ENCODE measurements at regions of chr12 and their contacts with region 1.

Region 1: DNA sequence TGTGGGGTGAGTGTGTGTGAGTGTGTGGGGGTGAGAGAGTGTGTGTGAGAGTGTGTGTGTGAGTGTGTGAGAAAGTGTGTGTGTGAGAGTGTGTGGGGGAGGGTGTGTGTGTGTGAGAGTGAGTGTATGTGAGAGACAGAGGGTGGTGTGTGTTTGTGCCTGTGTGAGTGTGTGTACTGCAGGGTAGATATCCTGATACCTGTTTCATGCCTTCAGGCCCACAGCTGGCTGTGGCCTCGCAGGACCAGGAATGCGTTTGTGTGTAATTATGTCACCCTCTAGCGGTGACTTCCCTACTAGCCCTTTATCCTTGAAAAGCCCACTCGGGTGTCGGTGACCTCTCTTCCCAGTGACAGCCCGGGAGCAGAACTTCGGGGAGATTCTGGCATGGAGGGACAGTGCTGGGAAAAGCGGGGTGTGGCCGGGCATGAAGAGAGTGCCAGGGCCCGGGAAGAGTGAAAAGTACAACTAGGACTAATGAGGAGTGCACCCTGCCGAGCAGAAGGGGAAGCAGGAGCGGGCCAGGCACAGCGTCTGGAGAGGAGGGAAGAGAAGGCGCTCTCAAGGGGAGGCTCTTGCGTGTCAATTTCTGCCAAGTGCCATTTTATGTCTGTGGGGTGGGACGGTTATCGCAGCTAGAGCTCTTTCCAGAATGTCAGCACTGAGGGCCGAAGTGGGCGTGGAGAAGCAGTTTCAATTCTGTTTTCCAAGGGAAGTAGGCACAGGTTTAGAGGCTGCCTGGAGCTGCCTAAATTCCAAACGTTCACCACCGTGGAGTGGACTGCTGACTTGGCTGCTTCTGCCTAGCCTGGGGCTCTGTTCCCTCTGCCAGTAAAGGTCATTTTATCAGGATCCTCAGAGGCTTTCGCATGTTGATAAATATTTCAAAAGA is 11.0 kb upstream of the FBXL14 start:
- DNase-seq: peak; percentile 45 to 89
- ATAC-seq: peak; percentile 69 to 78 (median 76)
- H3K4me3 ChIP-seq: peak overlapping the region; percentile 29
- H3K4me3 Mint-ChIP-seq: peak overlapping the region; percentile 94
- H3K27ac ChIP-seq: no peak overlapping the region
- H3K27ac Mint-ChIP-seq: peak overlapping the region; percentile 54 to 89
- H3K4me1 ChIP-seq: peaks cover 31% of the 10 kb centered on the region
- H3K4me1 Mint-ChIP-seq: peaks cover 21 to 32% of the 10 kb centered on the region in 2 donors
- H3K27me3 ChIP-seq: no peaks in the 10 kb centered on the region
- H3K27me3 Mint-ChIP-seq: peaks cover 6 to 16% of the 10 kb centered on the region in 2 donors
- CTCF ChIP-seq: peak; percentile 70

Region 2: GRCh38 chr12:1117970-1118563 is 487.3 kb before region 1 on chr12:
- intact Hi-C with region 1: loop called (anchors 1 kb)
- DNase-seq: peak; percentile 57 to 89
- ATAC-seq: peak; percentile 74 to 89 (median 85)
- H3K4me3 ChIP-seq: no peak overlapping the region
- H3K4me3 Mint-ChIP-seq: no peak overlapping the region
- H3K27ac ChIP-seq: no peak overlapping the region
- H3K27ac Mint-ChIP-seq: no peak overlapping the region
- H3K4me1 ChIP-seq: peaks cover 4% of the 10 kb centered on the region
- H3K4me1 Mint-ChIP-seq: peaks cover 6 to 7% of the 10 kb centered on the region in 2 donors
- H3K27me3 ChIP-seq: no peaks in the 10 kb centered on the region
- H3K27me3 Mint-ChIP-seq: no peaks in the 10 kb centered on the region
- CTCF ChIP-seq: peak; percentile 97

Region 3: GRCh38 chr12:1562813-1563407 is 42.5 kb before region 1 on chr12:
- intact Hi-C with region 1: no loop called
- DNase-seq: no peak
- ATAC-seq: no peak
- H3K4me3 ChIP-seq: no peak overlapping the region
- H3K4me3 Mint-ChIP-seq: no peak overlapping the region
- H3K27ac ChIP-seq: no peak overlapping the region
- H3K27ac Mint-ChIP-seq: no peak overlapping the region
- H3K4me1 ChIP-seq: no peaks in the 10 kb centered on the region
- H3K4me1 Mint-ChIP-seq: no peaks in the 10 kb centered on the region
- H3K27me3 ChIP-seq: no peaks in the 10 kb centered on the region
- H3K27me3 Mint-ChIP-seq: peaks cover 12 to 25% of the 10 kb centered on the region in 2 donors
- CTCF ChIP-seq: no peak

Region 4: GRCh38 chr12:1575408-1576401 is 29.7 kb before region 1 on chr12:
- intact Hi-C with region 1: no loop called
- DNase-seq: no peak
- ATAC-seq: no peak
- H3K4me3 ChIP-seq: no peak overlapping the region
- H3K4me3 Mint-ChIP-seq: no peak overlapping the region
- H3K27ac ChIP-seq: no peak overlapping the region
- H3K27ac Mint-ChIP-seq: peak overlapping the region in 1 of 2 donors; percentile 38
- H3K4me1 ChIP-seq: no peaks in the 10 kb centered on the region
- H3K4me1 Mint-ChIP-seq: peaks cover 5 to 6% of the 10 kb centered on the region in 2 donors
- H3K27me3 ChIP-seq: no peaks in the 10 kb centered on the region
- H3K27me3 Mint-ChIP-seq: peaks cover 14 to 16% of the 10 kb centered on the region in 2 donors
- CTCF ChIP-seq: no peak

Region 5: DNA sequence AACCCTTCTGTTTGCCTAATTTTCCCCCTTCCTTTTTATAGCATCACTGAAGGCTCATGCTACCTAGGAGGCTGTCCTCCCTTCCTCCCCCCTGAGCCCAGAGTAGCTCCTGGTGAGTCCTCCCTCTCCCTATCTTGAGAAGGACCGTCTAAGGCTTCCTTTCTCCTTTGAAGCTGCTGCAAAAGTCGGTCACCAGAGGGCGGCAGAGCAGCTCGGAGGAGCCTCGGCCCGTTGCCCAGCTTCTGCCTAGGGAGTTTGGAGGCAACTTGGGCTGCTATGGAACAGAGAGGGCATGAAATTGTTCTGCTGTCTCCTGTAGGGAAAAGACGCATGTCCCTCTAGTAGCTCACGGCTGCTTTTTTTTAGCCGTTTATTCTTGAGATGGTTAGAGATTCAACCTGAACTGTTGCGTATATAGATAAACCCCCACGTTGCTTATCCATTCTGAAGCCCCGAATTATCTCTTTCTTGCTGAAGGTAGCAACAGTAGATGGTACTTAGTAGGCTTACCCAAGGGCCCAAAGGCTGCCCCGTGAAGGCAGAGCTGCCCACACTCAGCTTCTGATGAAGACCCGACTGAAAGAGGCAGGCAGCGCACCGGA is 29.3 kb after region 1 on chr12:
- intact Hi-C with region 1: no loop called
- DNase-seq: peak; percentile 45 to 76
- ATAC-seq: peak; percentile 73 to 80 (median 80)
- H3K4me3 ChIP-seq: no peak overlapping the region
- H3K4me3 Mint-ChIP-seq: no peak overlapping the region
- H3K27ac ChIP-seq: no peak overlapping the region
- H3K27ac Mint-ChIP-seq: no peak overlapping the region
- H3K4me1 ChIP-seq: peaks cover 15% of the 10 kb centered on the region
- H3K4me1 Mint-ChIP-seq: peaks cover 0 to 14% of the 10 kb centered on the region in 2 donors
- H3K27me3 ChIP-seq: peaks cover 17% of the 10 kb centered on the region
- H3K27me3 Mint-ChIP-seq: peaks cover 35 to 55% of the 10 kb centered on the region in 2 donors
- CTCF ChIP-seq: peak; percentile 63

Region 6: DNA sequence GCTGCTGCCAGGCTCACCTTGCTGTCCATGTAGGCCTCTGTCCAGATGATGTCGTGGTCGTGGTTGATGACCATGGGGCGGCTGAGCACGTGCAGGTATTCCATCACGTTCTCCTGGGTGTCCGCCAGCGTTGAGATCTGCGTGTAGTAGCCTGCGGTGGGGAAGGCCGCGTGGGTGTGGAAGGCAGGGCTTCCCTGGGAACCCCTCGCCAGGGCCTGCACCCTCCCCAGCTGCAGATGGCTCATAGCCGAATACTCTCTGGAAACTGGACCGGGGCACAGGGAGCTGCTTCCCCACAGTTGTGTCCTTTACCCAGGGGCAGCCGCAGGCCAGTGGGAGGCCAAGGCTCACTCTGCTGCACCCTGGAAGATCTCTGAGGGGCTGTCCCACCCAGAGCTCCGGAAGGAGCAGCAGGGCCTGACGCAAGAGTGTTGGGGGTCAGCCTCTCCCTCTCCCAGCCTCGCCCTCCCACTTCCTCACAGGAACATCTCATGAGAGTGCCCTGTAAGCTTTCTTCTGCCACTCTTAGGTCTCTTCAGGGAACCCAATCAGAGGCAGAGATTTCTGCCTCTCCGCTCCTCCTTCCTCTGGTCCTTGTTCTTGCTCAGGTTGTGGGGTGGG is 277.6 kb after region 1 on chr12:
- intact Hi-C with region 1: no loop called
- DNase-seq: no peak
- ATAC-seq: no peak
- H3K4me3 ChIP-seq: no peak overlapping the region
- H3K4me3 Mint-ChIP-seq: no peak overlapping the region
- H3K27ac ChIP-seq: no peak overlapping the region
- H3K27ac Mint-ChIP-seq: no peak overlapping the region
- H3K4me1 ChIP-seq: no peaks in the 10 kb centered on the region
- H3K4me1 Mint-ChIP-seq: no peaks in the 10 kb centered on the region
- H3K27me3 ChIP-seq: no peaks in the 10 kb centered on the region
- H3K27me3 Mint-ChIP-seq: peaks cover 7 to 19% of the 10 kb centered on the region in 2 donors
- CTCF ChIP-seq: no peak

Measured in natural killer cell (primary cell).